ENCODE measurements at regions of chr14 and their contacts with region 1.

Region 1: DNA sequence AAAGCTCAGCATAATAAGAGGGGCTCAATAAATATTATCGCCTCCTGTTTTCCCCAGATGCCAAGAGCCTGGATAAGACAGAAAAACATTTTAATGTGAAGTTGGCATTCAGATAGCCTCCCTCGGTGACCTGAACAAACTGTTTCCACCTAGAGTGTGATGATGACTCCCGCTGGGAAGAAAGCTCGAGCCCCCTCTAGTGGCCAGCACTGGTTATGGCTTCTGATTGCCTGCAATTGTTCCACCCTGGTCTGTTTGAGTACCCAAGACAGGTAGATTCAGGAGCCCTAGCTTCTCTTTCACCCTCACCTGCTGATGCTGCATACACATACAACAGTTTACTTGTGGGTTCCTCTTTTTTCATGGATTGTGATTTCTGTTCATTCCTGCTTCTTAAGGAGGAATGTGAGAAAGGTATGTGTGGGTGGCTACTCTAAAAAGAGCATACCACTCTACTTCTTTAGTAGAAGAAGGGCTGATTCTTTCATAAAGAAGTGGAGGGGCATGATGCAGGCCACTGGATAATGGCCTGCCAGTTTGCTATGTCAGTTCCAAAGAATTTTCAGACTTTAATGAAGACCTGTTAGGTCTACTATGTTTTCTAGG is 6.4 kb downstream of the ERG28 start:
- DNase-seq: peak; percentile 89
- ATAC-seq: peak; percentile 98
- H3K4me3 Mint-ChIP-seq: no peak overlapping the region
- H3K27ac Mint-ChIP-seq: no peak overlapping the region
- H3K4me1 Mint-ChIP-seq: peaks cover 9% of the 10 kb centered on the region
- H3K27me3 Mint-ChIP-seq: no peaks in the 10 kb centered on the region
- CTCF ChIP-seq: peak; percentile 95

Region 2: GRCh38 chr14:75307700-75308379 is 346.4 kb before region 1 on chr14:
- CTCF ChIA-PET with region 1: interaction called, 13 read pairs
- POLR2A ChIA-PET with region 1: no interaction called
- intact Hi-C with region 1: loop called (anchors 5 kb)
- DNase-seq: peak; percentile 82
- ATAC-seq: peak; percentile 62
- H3K4me3 Mint-ChIP-seq: no peak overlapping the region
- H3K27ac Mint-ChIP-seq: no peak overlapping the region
- H3K4me1 Mint-ChIP-seq: peaks cover 13% of the 10 kb centered on the region
- H3K27me3 Mint-ChIP-seq: peaks cover 1% of the 10 kb centered on the region
- CTCF ChIP-seq: peak; percentile 97

Region 3: DNA sequence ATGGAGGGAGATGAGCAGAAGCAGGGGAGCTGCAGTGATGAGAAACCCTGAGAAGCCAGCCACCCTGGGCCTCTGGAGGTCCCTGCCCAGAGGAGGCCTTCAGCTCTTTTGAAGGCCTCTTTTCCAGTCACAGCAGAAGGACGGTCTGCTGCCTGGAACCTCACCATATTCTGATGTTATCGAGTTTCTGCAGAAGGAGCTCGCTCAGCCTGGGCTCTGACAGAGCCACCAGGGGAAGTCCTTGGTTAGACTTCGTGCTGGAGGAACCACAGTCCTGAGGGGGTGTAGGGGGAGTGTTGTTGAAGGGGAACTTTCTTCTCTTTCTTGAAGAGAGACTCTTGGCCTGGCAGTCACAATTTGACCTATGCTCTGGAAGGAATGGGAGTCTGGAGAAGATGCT is 157.0 kb before region 1 on chr14:
- CTCF ChIA-PET with region 1: interaction called, 5 read pairs
- POLR2A ChIA-PET with region 1: no interaction called
- intact Hi-C with region 1: loop called (anchors 10 kb)
- DNase-seq: peak; percentile 75
- ATAC-seq: peak; percentile 83
- H3K4me3 Mint-ChIP-seq: peak overlapping the region; percentile 14
- H3K27ac Mint-ChIP-seq: peak overlapping the region; percentile 80
- H3K4me1 Mint-ChIP-seq: peaks cover 59% of the 10 kb centered on the region
- H3K27me3 Mint-ChIP-seq: no peaks in the 10 kb centered on the region
- CTCF ChIP-seq: no peak

Region 4: DNA sequence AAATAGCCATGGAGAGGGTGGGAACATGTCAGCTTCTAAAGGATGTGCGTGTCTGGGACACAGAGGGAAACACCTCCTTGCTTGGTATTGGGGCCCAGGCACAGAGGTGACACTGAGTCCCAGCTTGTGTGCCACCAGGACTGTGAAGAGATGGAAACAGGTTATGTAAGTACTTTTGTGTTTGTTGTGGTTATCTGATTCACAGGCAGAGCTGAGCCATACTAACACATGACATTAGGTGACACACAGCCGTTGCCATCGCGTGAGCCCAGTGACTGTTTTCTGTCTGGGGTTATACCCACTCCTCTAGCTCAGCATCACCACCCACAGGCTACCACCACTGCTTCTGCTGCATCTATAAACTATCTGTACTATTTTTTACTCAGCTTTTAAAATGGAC is 87.9 kb before region 1 on chr14:
- CTCF ChIA-PET with region 1: interaction called, 281 read pairs
- POLR2A ChIA-PET with region 1: interaction called, 3 read pairs
- intact Hi-C with region 1: no loop called
- DNase-seq: peak; percentile 96
- ATAC-seq: peak; percentile 82
- H3K4me3 Mint-ChIP-seq: peak overlapping the region; percentile 30
- H3K27ac Mint-ChIP-seq: peak overlapping the region; percentile 88
- H3K4me1 Mint-ChIP-seq: peaks cover 76% of the 10 kb centered on the region
- H3K27me3 Mint-ChIP-seq: no peaks in the 10 kb centered on the region
- CTCF ChIP-seq: no peak

Region 5: GRCh38 chr14:75619548-75619947 is 34.7 kb before region 1 on chr14:
- CTCF ChIA-PET with region 1: interaction called, 23 read pairs
- POLR2A ChIA-PET with region 1: no interaction called
- intact Hi-C with region 1: no loop called
- DNase-seq: no peak
- ATAC-seq: no peak
- H3K4me3 Mint-ChIP-seq: no peak overlapping the region
- H3K27ac Mint-ChIP-seq: no peak overlapping the region
- H3K4me1 Mint-ChIP-seq: no peaks in the 10 kb centered on the region
- H3K27me3 Mint-ChIP-seq: no peaks in the 10 kb centered on the region
- CTCF ChIP-seq: no peak

Region 6: GRCh38 chr14:75643985-75644384 is 10.2 kb before region 1 on chr14:
- CTCF ChIA-PET with region 1: interaction called, 10 read pairs
- POLR2A ChIA-PET with region 1: no interaction called
- intact Hi-C with region 1: no loop called
- DNase-seq: no peak
- ATAC-seq: no peak
- H3K4me3 Mint-ChIP-seq: no peak overlapping the region
- H3K27ac Mint-ChIP-seq: no peak overlapping the region
- H3K4me1 Mint-ChIP-seq: no peaks in the 10 kb centered on the region
- H3K27me3 Mint-ChIP-seq: no peaks in the 10 kb centered on the region
- CTCF ChIP-seq: no peak

Region 7: DNA sequence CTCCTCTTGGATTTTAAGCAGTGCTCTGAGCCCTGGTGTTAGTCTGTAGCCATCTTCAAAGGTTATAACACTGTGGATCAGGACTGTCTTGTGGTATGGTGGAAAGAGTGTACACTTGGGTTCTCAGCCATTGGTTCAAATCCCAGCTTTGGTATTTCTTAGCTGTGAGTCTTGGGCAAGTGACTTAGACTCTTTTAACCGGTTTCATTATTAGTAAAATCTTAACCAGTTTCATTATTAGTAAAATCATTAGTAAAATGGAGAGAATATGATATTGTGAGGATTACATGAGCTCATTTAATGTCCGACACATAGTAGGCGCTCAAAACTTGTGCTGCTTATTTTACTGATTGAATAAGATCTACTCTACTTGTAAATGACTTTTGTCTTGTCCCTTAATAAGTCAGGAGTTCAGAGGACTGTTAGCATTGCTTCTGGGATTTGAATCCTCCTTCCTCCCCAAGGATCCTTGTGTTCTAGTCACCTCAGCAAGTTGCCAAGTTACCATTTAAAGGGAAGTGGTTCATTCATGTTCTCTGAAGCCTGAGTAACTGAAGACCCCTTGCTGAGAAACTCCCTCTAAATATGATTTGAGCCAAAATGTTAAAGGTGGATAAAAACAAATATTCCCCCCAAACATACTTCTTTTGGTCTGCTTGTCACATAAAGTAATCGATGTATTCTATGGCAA is 19.3 kb after region 1 on chr14:
- CTCF ChIA-PET with region 1: interaction called, 11 read pairs
- POLR2A ChIA-PET with region 1: no interaction called
- intact Hi-C with region 1: no loop called
- DNase-seq: no peak
- ATAC-seq: peak; percentile 87
- H3K4me3 Mint-ChIP-seq: no peak overlapping the region
- H3K27ac Mint-ChIP-seq: peak overlapping the region; percentile 71
- H3K4me1 Mint-ChIP-seq: peaks cover 19% of the 10 kb centered on the region
- H3K27me3 Mint-ChIP-seq: no peaks in the 10 kb centered on the region
- CTCF ChIP-seq: no peak